Heart right ventricle (tissue), 16 donors: ENCODE measurements at regions of chr7 and their contacts with region 1.

Region 1: DNA sequence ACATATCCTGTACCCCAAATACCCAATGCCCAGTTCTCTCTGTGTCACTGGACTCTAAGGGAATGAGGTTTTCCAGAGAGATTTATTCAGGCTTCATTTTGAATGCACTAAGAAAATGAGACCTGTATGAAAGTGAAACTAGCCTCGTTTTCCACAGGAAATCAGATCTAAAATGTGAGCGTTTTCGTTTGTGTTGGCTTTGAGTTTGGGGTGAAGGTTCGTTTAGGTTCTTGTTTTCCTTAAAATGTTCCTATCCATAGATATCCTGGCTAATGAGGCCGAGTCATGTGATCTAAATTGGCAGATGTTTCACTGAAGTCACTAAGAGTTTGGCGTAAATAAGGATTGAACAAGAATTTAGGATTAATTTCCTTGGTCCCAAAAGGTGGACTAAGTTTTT is 90.9 kb upstream of the BMPER start:
- DNase-seq: no peak
- ATAC-seq: peak in 5 of 8 donors; percentile 17 to 60 (median 48)
- H3K4me3 ChIP-seq: peak overlapping the region in 8 of 10 donors; percentile 8 to 48 (median 36)
- H3K27ac ChIP-seq: peak overlapping the region in 9 of 10 donors; percentile 1 to 66 (median 52)
- H3K4me1 ChIP-seq: peaks cover 0 to 21% (median 6%) of the 10 kb centered on the region in 9 donors
- H3K27me3 ChIP-seq: no peaks in the 10 kb centered on the region
- CTCF ChIP-seq: no peak

Region 2: GRCh38 chr7:33411020-33411419 is 403.4 kb before region 1 on chr7:
- intact Hi-C with region 1: no loop called
- DNase-seq: no peak
- ATAC-seq: no peak
- H3K4me3 ChIP-seq: no peak overlapping the region
- H3K27ac ChIP-seq: no peak overlapping the region
- H3K4me1 ChIP-seq: peaks cover 0 to 10% (median 0%) of the 10 kb centered on the region in 9 donors
- H3K27me3 ChIP-seq: no peaks in the 10 kb centered on the region
- CTCF ChIP-seq: no peak

Region 3: DNA sequence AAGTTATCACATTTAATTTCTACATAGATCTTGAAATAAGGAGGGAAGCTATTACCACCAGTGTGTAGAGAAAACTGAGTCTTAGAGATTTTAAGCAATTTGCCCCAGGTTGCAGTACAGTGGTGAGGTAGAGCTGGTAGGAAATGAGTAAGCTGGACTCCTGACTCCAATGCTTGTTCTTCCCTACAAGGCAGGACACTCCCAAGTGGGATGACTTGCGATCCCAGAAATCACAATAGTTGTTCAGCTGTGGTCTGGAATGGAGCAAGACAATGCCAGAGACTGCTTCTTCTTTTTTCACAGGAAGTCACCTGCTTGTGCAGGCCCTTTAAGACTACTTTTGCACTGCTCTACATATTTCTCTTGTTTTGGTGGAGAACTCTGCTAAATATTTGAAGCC is 236.2 kb before region 1 on chr7:
- intact Hi-C with region 1: no loop called
- DNase-seq: no peak
- ATAC-seq: no peak
- H3K4me3 ChIP-seq: no peak overlapping the region
- H3K27ac ChIP-seq: no peak overlapping the region
- H3K4me1 ChIP-seq: no peaks in the 10 kb centered on the region
- H3K27me3 ChIP-seq: no peaks in the 10 kb centered on the region
- CTCF ChIP-seq: no peak

Region 4: GRCh38 chr7:33764752-33765451 is 49.5 kb before region 1 on chr7:
- intact Hi-C with region 1: loop called in 1 of 10 experiments (anchors 5 kb)
- DNase-seq: no peak
- ATAC-seq: peak in 4 of 8 donors; percentile 46 to 53 (median 47)
- H3K4me3 ChIP-seq: no peak overlapping the region
- H3K27ac ChIP-seq: no peak overlapping the region
- H3K4me1 ChIP-seq: peaks cover 0 to 4% (median 0%) of the 10 kb centered on the region in 9 donors
- H3K27me3 ChIP-seq: no peaks in the 10 kb centered on the region
- CTCF ChIP-seq: no peak

Region 5: DNA sequence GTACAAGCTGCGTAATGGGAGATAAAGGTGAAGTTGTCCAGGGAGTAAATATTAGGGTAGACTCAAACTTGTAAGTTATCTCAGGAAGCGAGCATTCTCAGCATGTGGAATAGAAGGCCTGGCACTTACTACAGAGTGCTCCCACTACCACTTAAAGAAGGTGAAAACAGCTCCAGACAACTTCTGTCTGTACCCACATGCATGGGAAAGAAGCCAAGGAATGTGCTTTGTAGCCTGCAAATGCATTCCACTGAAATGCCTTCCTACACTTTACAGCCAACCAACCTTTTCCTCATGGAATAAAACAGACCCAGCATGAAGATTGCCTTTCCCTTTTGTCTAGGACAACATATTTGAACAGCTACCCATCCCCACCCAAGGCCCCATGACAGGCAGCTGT is 798.3 kb after region 1 on chr7:
- intact Hi-C with region 1: no loop called
- DNase-seq: no peak
- ATAC-seq: peak; percentile 8 to 88 (median 69)
- H3K4me3 ChIP-seq: no peak overlapping the region
- H3K27ac ChIP-seq: peak overlapping the region in 8 of 10 donors; percentile 20 to 72 (median 34)
- H3K4me1 ChIP-seq: peaks cover 0 to 14% (median 0%) of the 10 kb centered on the region in 9 donors
- H3K27me3 ChIP-seq: no peaks in the 10 kb centered on the region
- CTCF ChIP-seq: no peak